Naive thymus-derived CD4-positive, alpha-beta T cell (primary cell): ENCODE measurements at regions of chr5 and their contacts with region 1.

Region 1: DNA sequence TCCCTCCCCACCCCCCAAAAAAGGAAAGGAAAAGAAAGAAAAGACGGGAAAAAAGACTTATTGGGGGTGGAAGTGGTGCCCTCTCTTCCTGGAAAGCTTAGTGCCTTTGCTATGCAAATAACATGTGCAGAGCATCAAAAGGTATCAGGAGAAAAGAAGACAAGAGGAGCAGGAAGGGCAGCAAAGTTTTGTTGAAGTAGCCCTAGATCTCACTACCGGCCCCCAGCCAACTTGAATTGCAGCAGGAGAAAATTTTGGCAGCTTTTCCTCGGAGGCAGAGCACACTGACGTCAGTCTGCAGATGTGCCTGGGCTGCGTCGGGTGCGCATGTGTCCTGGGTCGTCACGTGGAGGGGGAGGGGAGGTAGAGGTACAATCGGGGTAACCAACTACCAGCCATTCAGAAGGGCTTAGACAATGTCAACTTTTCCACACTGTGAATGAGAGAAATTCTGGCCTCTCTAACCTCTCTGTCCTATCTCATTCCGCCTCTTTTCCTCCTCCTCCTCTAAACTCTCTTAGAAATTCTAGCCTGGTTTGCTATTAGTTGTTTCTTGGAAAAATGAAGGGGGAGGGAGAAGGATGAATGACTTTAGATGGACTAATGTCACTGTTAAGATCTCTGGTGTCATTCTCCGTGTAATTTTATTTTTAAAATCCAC is at the start of gene ADAMTS6:
- DNase-seq: peak; percentile 39 to 84 (median 72)
- ATAC-seq: peak; percentile 90
- H3K4me3 ChIP-seq: peak within 1 kb of the TSS; percentile 70
- H3K4me3 Mint-ChIP-seq: peak within 1 kb of the TSS in 2 of 10 donors; percentile 94
- H3K27ac ChIP-seq: peak within 1 kb of the TSS; percentile 73
- H3K27ac Mint-ChIP-seq: peak within 1 kb of the TSS in 8 of 9 donors; percentile 85 to 98 (median 92)
- H3K4me1 ChIP-seq: peaks cover 3 to 5% of the 10 kb centered on the region in 2 donors
- H3K4me1 Mint-ChIP-seq: peaks cover 5 to 20% (median 8%) of the 10 kb centered on the region in 7 donors
- H3K27me3 ChIP-seq: no peaks in the 10 kb centered on the region
- H3K27me3 Mint-ChIP-seq: peaks cover 0 to 7% (median 0%) of the 10 kb centered on the region in 5 donors
- total RNA-seq, gene ADAMTS6: 0.63 to 4.5 (median 2.6) TPM

Region 2: GRCh38 chr5:64634997-64635686 is 846.6 kb before region 1 on chr5:
- CTCF ChIA-PET with region 1: interaction called, 4 read pairs
- POLR2A ChIA-PET with region 1: no interaction called
- intact Hi-C with region 1: loop called (anchors 1 kb)
- DNase-seq: peak in 6 of 9 donors; percentile 2 to 41 (median 35)
- ATAC-seq: peak; percentile 60
- H3K4me3 ChIP-seq: no peak overlapping the region
- H3K4me3 Mint-ChIP-seq: no peak overlapping the region
- H3K27ac ChIP-seq: no peak overlapping the region
- H3K27ac Mint-ChIP-seq: no peak overlapping the region
- H3K4me1 ChIP-seq: no peaks in the 10 kb centered on the region
- H3K4me1 Mint-ChIP-seq: peaks cover 0 to 9% (median 0%) of the 10 kb centered on the region in 7 donors
- H3K27me3 ChIP-seq: peaks cover 0 to 3% of the 10 kb centered on the region in 2 donors
- H3K27me3 Mint-ChIP-seq: peaks cover 15 to 28% (median 21%) of the 10 kb centered on the region in 5 donors

Region 3: DNA sequence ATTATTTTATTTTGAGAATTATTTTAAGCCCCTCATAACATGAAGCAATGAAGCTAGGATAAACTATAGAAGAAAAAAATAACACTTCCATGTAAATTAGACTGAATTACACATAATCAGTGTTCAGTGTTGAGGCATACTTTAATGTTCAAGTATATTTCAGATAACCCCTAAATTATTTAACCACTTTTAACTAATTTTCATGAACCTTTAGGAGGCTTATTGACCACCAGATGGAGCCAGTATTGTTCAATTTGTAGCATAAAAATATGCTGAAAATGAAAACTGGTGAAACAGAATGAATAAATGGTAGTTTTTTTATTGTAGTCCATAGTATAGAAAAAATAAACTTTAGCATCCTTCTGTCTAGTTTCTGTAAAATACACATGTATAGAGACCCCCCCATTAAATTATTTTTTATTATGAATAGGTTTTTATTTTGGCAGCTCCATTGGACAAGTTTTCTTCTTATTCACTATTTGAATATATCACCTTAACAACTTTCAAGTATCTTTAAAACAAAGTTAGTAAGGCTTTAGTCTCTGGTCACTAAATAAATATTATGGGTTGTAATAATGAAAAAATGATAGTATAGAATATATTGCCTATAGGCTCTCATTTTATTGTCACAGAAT is 522.9 kb before region 1 on chr5:
- CTCF ChIA-PET with region 1: interaction called, 25 read pairs
- POLR2A ChIA-PET with region 1: no interaction called
- intact Hi-C with region 1: loop called (anchors 1 kb)
- DNase-seq: peak in 5 of 9 donors; percentile 3 to 20 (median 9)
- ATAC-seq: no peak
- H3K4me3 ChIP-seq: no peak overlapping the region
- H3K4me3 Mint-ChIP-seq: no peak overlapping the region
- H3K27ac ChIP-seq: no peak overlapping the region
- H3K27ac Mint-ChIP-seq: no peak overlapping the region
- H3K4me1 ChIP-seq: no peaks in the 10 kb centered on the region
- H3K4me1 Mint-ChIP-seq: no peaks in the 10 kb centered on the region
- H3K27me3 ChIP-seq: no peaks in the 10 kb centered on the region
- H3K27me3 Mint-ChIP-seq: peaks cover 0 to 3% (median 0%) of the 10 kb centered on the region in 5 donors

Region 4: DNA sequence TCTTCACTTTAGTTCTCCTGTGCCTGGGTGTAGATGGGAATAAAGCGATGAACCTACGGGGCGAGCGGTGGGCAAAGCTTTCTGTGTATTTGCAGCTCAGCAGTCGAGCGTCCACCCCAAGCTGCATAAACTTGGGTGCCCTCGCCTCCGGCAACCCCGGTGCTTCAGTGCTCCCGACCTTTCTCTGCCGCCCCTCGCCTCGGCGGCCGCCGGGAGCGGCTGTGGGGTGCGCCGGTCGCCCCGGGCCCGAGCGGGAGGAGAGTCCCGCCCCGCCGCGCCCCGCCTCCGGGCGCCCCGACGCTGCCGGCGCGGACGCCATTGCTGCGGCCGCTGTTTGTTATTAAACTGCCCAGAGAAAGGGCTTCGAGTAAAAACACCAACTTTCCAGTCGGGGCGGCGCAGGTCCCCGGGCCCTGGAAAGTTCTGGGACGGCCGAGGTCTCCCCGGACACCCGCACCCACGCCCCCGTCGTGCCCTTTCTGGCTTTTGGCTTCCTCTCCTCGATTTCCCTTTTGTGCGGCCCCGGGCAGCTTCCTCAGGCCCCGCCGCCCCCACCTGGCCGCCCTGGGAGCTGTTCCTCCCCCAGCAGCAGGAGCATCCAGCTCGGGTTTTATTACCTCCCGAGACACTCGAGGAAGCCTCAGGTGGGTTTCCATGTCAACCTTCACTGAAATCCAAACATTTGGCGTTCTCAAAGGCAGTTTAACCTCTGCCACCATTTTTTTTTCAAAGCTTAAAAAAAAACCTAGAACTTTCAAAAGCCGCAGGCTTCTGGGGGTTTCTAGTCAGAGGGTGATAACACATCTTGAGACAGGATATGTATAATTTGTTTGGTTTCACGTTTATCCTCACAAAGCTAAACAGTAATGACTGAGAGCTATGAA is 378.7 kb before region 1 on chr5:
- CTCF ChIA-PET with region 1: interaction called, 5 read pairs
- POLR2A ChIA-PET with region 1: interaction called, 3 read pairs
- intact Hi-C with region 1: loop called (anchors 1 kb)
- DNase-seq: peak; percentile 44 to 67 (median 57)
- ATAC-seq: peak; percentile 78
- H3K4me3 ChIP-seq: peak overlapping the region; percentile 63
- H3K4me3 Mint-ChIP-seq: peak overlapping the region; percentile 82 to 93 (median 87)
- H3K27ac ChIP-seq: peak overlapping the region; percentile 82
- H3K27ac Mint-ChIP-seq: peak overlapping the region; percentile 83 to 96 (median 92)
- H3K4me1 ChIP-seq: peaks cover 12% of the 10 kb centered on the region in 2 donors
- H3K4me1 Mint-ChIP-seq: peaks cover 32 to 52% (median 41%) of the 10 kb centered on the region in 7 donors
- H3K27me3 ChIP-seq: no peaks in the 10 kb centered on the region
- H3K27me3 Mint-ChIP-seq: peaks cover 0 to 22% (median 0%) of the 10 kb centered on the region in 5 donors

Region 5: GRCh38 chr5:65229841-65230240 is 251.9 kb before region 1 on chr5:
- CTCF ChIA-PET with region 1: no interaction called
- POLR2A ChIA-PET with region 1: no interaction called
- intact Hi-C with region 1: no loop called
- DNase-seq: no peak
- ATAC-seq: no peak
- H3K4me3 ChIP-seq: no peak overlapping the region
- H3K4me3 Mint-ChIP-seq: no peak overlapping the region
- H3K27ac ChIP-seq: no peak overlapping the region
- H3K27ac Mint-ChIP-seq: no peak overlapping the region
- H3K4me1 ChIP-seq: no peaks in the 10 kb centered on the region
- H3K4me1 Mint-ChIP-seq: no peaks in the 10 kb centered on the region
- H3K27me3 ChIP-seq: no peaks in the 10 kb centered on the region
- H3K27me3 Mint-ChIP-seq: no peaks in the 10 kb centered on the region

Region 6: DNA sequence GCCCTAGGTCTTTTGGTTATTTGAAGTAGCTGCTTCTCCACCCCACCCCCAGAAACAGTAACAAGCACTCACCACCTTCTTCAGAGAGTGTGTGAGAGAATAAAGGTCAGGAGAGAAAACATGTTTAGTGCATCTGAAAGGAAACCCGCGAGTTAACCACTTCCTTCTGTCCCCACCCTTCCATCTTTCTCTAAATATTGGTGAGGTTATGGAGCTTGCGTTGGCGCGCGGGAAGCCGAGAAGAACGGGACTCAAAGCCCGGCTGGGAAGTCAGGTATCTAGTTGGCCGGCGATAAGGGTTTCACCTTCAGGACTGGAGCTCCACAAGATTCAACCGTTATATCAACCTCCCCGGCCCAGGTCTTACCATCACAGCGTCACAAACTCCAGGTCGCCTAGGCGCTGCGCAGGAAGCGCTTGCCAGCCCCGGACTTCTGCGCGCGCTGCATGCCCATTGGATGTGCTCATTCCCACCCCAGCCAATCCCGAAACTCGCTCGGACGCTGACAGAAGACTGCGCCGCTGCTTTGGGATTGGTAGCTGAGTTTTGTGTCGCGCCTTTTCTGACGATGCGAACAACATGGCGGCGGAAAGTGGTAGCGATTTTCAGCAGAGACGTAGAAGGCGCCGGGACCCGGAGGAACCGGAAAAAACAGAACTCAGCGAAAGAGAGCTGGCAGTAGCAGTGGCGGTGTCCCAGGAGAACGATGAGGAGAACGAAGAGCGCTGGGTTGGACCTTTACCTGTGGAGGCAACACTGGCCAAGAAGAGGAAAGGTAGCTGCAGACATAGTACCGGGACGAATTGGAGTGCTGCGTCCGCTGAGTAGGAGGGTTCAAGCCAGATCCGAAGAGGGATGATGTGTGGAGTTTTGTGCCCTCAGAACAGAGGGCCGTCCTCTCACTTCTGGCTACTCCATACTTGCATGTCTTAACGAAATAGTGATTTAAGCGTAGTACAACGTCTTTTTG is 81.3 kb after region 1 on chr5 and contains the starts of genes CENPK and PPWD1:
- CTCF ChIA-PET with region 1: interaction called, 3 read pairs
- POLR2A ChIA-PET with region 1: interaction called, 6 read pairs
- intact Hi-C with region 1: loop called (anchors 1 kb)
- DNase-seq: peak; percentile 83 to 97 (median 94)
- ATAC-seq: peak; percentile 99
- H3K4me3 ChIP-seq: peak within 1 kb of the TSS; percentile 93
- H3K4me3 Mint-ChIP-seq: peak within 1 kb of the TSS; percentile 92 to 99 (median 96)
- H3K27ac ChIP-seq: peak within 1 kb of the TSS; percentile 93
- H3K27ac Mint-ChIP-seq: peak within 1 kb of the TSS; percentile 97 to 100 (median 98)
- H3K4me1 ChIP-seq: peaks cover 30% of the 10 kb centered on the region in 2 donors
- H3K4me1 Mint-ChIP-seq: peaks cover 22 to 79% (median 59%) of the 10 kb centered on the region in 7 donors
- H3K27me3 ChIP-seq: no peaks in the 10 kb centered on the region
- H3K27me3 Mint-ChIP-seq: no peaks in the 10 kb centered on the region
- total RNA-seq, gene CENPK: 7.2 to 78.8 (median 14.1) TPM
- total RNA-seq, gene PPWD1: 61.7 to 104 (median 81.2) TPM